Endothelial cell of umbilical vein (primary cell): ENCODE measurements at regions of chr4 and their contacts with region 1.

Region 1: GRCh38 chr4:145234091-145234706 is 53.8 kb upstream of the OTUD4 start:
- DNase-seq: peak; percentile 65
- H3K4me3 ChIP-seq: no peak overlapping the region
- H3K27ac ChIP-seq: no peak overlapping the region
- H3K4me1 ChIP-seq: peaks cover 8% of the 10 kb centered on the region
- H3K27me3 ChIP-seq: no peaks in the 10 kb centered on the region
- CTCF ChIP-seq: peak; percentile 60 to 62
- POLR2A ChIP-seq: no peak

Region 2: DNA sequence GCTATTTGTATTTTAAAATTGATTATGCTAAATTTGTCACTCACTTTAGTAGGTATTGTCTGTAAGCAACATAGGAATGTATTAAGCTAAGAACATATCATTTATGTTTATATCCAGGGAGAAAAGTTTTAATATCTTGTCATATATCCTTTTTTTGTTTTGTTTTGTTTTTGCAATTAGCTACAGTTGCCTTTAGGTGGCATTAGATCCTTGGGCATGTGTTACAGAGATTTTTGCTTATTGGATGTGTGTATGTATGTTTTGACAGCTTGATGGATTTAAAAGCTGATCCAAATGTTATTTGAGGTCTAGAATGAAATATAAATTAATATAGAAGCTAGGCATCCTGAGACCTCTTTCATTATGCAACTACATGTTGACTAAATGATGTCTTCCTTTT is 17.7 kb before region 1 on chr4:
- CTCF ChIA-PET with region 1: interaction called, 22 read pairs
- POLR2A ChIA-PET with region 1: no interaction called
- dilution Hi-C with region 1: no loop called
- intact Hi-C with region 1: loop called (anchors 2 kb)
- DNase-seq: peak; percentile 64
- H3K4me3 ChIP-seq: no peak overlapping the region
- H3K27ac ChIP-seq: no peak overlapping the region
- H3K4me1 ChIP-seq: peaks cover 4% of the 10 kb centered on the region
- H3K27me3 ChIP-seq: peaks cover 4 to 5% of the 10 kb centered on the region in 2 experiments
- CTCF ChIP-seq: peak; percentile 28 to 34
- POLR2A ChIP-seq: no peak

Region 3: GRCh38 chr4:145299380-145300076 is 65.3 kb after region 1 on chr4:
- CTCF ChIA-PET with region 1: no interaction called
- POLR2A ChIA-PET with region 1: no interaction called
- dilution Hi-C with region 1: no loop called
- intact Hi-C with region 1: no loop called
- DNase-seq: no peak
- H3K4me3 ChIP-seq: no peak overlapping the region
- H3K27ac ChIP-seq: no peak overlapping the region
- H3K4me1 ChIP-seq: no peaks in the 10 kb centered on the region
- H3K27me3 ChIP-seq: peaks cover 0 to 4% of the 10 kb centered on the region in 2 experiments
- CTCF ChIP-seq: no peak
- POLR2A ChIP-seq: no peak

Region 4: GRCh38 chr4:145388043-145388442 is 153.8 kb after region 1 on chr4:
- CTCF ChIA-PET with region 1: interaction called, 10 read pairs
- POLR2A ChIA-PET with region 1: no interaction called
- dilution Hi-C with region 1: no loop called
- intact Hi-C with region 1: loop called (anchors 1 kb)
- DNase-seq: peak; percentile 80
- H3K4me3 ChIP-seq: peak overlapping the region in 1 of 3 experiments; percentile 32
- H3K27ac ChIP-seq: peak overlapping the region; percentile 67
- H3K4me1 ChIP-seq: peaks cover 25% of the 10 kb centered on the region
- H3K27me3 ChIP-seq: no peaks in the 10 kb centered on the region
- CTCF ChIP-seq: no peak
- POLR2A ChIP-seq: no peak

Region 5: DNA sequence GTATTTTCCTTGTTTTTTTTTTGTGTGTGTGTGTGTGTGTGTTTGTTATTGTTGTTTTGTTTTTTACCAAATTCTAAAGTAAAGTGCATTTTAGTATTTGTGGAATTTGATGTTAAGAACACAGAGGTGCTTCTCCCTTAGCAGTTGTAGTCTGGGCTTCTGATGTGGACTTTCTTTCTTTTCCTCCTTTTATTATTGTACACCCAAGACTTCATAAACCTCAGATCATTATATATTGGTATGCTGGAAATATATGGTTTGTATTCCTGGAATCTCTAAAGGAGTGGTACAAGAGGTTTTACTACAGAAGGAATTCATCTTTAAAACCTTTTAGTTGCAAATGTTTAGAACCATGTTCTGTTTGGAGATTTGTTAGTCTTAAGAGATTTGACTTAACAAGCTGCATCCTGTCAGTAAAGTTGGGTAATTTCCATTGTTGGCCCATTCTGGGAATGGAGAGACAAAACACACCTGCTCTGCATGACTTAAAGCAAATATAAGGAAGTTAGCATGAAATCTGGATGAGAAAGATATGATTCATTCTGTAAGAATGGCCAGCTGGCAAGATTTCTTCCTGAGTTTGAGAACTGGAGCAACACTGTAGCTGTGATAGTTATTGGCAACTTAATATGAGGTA is 311.5 kb after region 1 on chr4:
- CTCF ChIA-PET with region 1: interaction called, 11 read pairs
- POLR2A ChIA-PET with region 1: no interaction called
- dilution Hi-C with region 1: no loop called
- intact Hi-C with region 1: no loop called
- DNase-seq: peak; percentile 100
- H3K4me3 ChIP-seq: peak overlapping the region in 1 of 3 experiments; percentile 58
- H3K27ac ChIP-seq: peak overlapping the region; percentile 98
- H3K4me1 ChIP-seq: peaks cover 43% of the 10 kb centered on the region
- H3K27me3 ChIP-seq: no peaks in the 10 kb centered on the region
- CTCF ChIP-seq: no peak
- POLR2A ChIP-seq: peak; percentile 73

Region 6: GRCh38 chr4:145565328-145565727 is 331.1 kb after region 1 on chr4:
- CTCF ChIA-PET with region 1: interaction called, 10 read pairs
- POLR2A ChIA-PET with region 1: no interaction called
- dilution Hi-C with region 1: no loop called
- intact Hi-C with region 1: no loop called
- DNase-seq: no peak
- H3K4me3 ChIP-seq: no peak overlapping the region
- H3K27ac ChIP-seq: no peak overlapping the region
- H3K4me1 ChIP-seq: no peaks in the 10 kb centered on the region
- H3K27me3 ChIP-seq: peaks cover 0 to 4% of the 10 kb centered on the region in 2 experiments
- CTCF ChIP-seq: no peak
- POLR2A ChIP-seq: no peak

Region 7: GRCh38 chr4:145635630-145636029 is 401.4 kb after region 1 on chr4:
- CTCF ChIA-PET with region 1: no interaction called
- POLR2A ChIA-PET with region 1: no interaction called
- dilution Hi-C with region 1: no loop called
- intact Hi-C with region 1: no loop called
- DNase-seq: no peak
- H3K4me3 ChIP-seq: no peak overlapping the region
- H3K27ac ChIP-seq: no peak overlapping the region
- H3K4me1 ChIP-seq: no peaks in the 10 kb centered on the region
- H3K27me3 ChIP-seq: no peaks in the 10 kb centered on the region
- CTCF ChIP-seq: no peak
- POLR2A ChIP-seq: no peak

Region 8: DNA sequence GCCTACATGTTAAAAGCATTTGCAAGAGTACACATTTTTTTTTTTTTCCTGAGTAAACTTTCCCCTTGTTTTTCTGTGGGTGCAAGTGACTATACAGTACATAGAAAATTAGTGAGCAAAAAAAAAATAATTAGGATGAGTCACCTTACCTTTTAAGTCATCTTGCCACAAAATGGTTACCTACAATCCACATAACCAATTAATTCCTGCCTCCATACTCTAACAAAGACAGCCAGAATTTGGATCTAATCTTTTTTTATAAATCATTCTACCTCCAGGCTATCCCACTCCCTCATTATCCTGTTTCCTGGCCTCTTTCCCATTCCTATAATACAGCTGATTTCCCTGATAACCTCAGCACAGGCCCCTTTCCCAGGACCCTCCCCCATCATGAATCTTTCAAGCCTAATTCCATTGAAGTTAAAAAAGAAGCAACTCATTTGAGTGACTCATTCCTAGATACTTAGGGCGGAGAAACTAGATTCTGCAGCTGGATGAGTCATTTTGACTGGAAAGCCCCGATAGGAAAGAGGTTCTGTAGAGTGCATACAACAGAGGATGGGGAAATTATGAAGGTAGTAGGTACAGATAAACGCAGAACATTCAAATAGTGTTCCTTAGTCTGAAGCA is 573.9 kb after region 1 on chr4:
- CTCF ChIA-PET with region 1: no interaction called
- POLR2A ChIA-PET with region 1: no interaction called
- dilution Hi-C with region 1: no loop called
- intact Hi-C with region 1: no loop called
- DNase-seq: peak; percentile 93
- H3K4me3 ChIP-seq: no peak overlapping the region
- H3K27ac ChIP-seq: peak overlapping the region; percentile 82
- H3K4me1 ChIP-seq: peaks cover 44% of the 10 kb centered on the region
- H3K27me3 ChIP-seq: no peaks in the 10 kb centered on the region
- CTCF ChIP-seq: no peak
- POLR2A ChIP-seq: no peak